CD4-positive, alpha-beta T cell (primary cell): ENCODE measurements at regions of chr22 and their contacts with region 1.

Region 1: GRCh38 chr22:17806437-17806836 is 32.2 kb upstream of the BID start:
- DNase-seq: no peak
- ATAC-seq: no peak
- H3K4me3 ChIP-seq: no peak overlapping the region
- H3K4me3 Mint-ChIP-seq: no peak overlapping the region
- H3K27ac ChIP-seq: no peak overlapping the region
- H3K27ac Mint-ChIP-seq: no peak overlapping the region
- H3K4me1 ChIP-seq: no peaks in the 10 kb centered on the region
- H3K4me1 Mint-ChIP-seq: no peaks in the 10 kb centered on the region
- H3K27me3 ChIP-seq: no peaks in the 10 kb centered on the region
- H3K27me3 Mint-ChIP-seq: no peaks in the 10 kb centered on the region
- CTCF ChIP-seq: no peak

Region 2: GRCh38 chr22:17781319-17782031 is 25.0 kb before region 1 on chr22:
- CTCF ChIA-PET with region 1: no interaction called
- POLR2A ChIA-PET with region 1: no interaction called
- intact Hi-C with region 1: no loop called
- DNase-seq: peak in 9 of 14 experiments; percentile 11 to 89 (median 44)
- ATAC-seq: peak; percentile 22
- H3K4me3 ChIP-seq: no peak overlapping the region
- H3K4me3 Mint-ChIP-seq: peak overlapping the region; percentile 45
- H3K27ac ChIP-seq: peak overlapping the region in 1 of 2 donors; percentile 45
- H3K27ac Mint-ChIP-seq: peak overlapping the region; percentile 96
- H3K4me1 ChIP-seq: peaks cover 68% of the 10 kb centered on the region
- H3K4me1 Mint-ChIP-seq: peaks cover 48% of the 10 kb centered on the region
- H3K27me3 ChIP-seq: no peaks in the 10 kb centered on the region
- H3K27me3 Mint-ChIP-seq: no peaks in the 10 kb centered on the region
- CTCF ChIP-seq: no peak

Region 3: GRCh38 chr22:17794726-17795542 is 11.5 kb before region 1 on chr22:
- CTCF ChIA-PET with region 1: no interaction called
- POLR2A ChIA-PET with region 1: no interaction called
- intact Hi-C with region 1: loop called in 1 of 2 experiments (anchors 1 kb)
- DNase-seq: no peak
- ATAC-seq: no peak
- H3K4me3 ChIP-seq: no peak overlapping the region
- H3K4me3 Mint-ChIP-seq: no peak overlapping the region
- H3K27ac ChIP-seq: no peak overlapping the region
- H3K27ac Mint-ChIP-seq: no peak overlapping the region
- H3K4me1 ChIP-seq: no peaks in the 10 kb centered on the region
- H3K4me1 Mint-ChIP-seq: no peaks in the 10 kb centered on the region
- H3K27me3 ChIP-seq: no peaks in the 10 kb centered on the region
- H3K27me3 Mint-ChIP-seq: no peaks in the 10 kb centered on the region
- CTCF ChIP-seq: no peak